ENCODE measurements at regions of chr3 and their contacts with region 1.

Region 1: DNA sequence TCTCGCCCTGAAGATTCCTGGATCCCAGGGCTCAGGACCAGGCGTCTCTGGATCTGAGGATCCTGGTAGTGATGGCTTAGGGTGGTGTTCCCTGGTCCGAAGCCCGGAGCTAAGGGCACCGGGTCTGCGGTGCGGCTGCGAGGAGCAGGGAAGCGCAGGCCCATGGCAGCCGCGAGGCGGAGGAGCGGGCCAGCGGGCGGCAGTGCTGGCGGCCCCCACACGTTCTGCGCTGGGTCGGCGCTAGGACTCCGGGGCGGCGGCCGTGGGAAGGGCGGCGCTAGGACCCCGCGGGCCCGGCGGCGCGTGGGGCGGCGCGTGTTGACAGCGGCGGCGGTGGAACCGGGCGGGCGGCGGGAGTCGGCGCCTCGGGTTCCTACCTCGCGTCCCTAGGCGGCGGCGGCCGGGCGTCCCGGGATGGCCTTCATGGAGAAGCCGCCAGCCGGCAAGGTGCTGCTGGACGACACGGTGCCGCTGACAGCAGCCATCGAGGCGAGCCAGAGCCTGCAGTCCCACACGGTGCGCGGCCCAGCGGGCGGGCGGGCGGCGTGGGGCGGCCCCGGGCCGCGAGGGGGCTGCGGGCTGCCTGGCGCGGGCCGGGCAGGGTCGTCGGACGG is at the start of gene PXK:
- DNase-seq: no peak
- H3K4me3 ChIP-seq: peak within 1 kb of the TSS; percentile 90 to 95
- H3K27ac ChIP-seq: peak within 1 kb of the TSS; percentile 84
- H3K4me1 ChIP-seq: peaks cover 58% of the 10 kb centered on the region
- H3K27me3 ChIP-seq: no peaks in the 10 kb centered on the region
- CTCF ChIP-seq: no peak
- POLR2A ChIP-seq: peak in 1 of 2 donors; percentile 48
- total RNA-seq, gene PXK: 59.9 TPM

Region 2: DNA sequence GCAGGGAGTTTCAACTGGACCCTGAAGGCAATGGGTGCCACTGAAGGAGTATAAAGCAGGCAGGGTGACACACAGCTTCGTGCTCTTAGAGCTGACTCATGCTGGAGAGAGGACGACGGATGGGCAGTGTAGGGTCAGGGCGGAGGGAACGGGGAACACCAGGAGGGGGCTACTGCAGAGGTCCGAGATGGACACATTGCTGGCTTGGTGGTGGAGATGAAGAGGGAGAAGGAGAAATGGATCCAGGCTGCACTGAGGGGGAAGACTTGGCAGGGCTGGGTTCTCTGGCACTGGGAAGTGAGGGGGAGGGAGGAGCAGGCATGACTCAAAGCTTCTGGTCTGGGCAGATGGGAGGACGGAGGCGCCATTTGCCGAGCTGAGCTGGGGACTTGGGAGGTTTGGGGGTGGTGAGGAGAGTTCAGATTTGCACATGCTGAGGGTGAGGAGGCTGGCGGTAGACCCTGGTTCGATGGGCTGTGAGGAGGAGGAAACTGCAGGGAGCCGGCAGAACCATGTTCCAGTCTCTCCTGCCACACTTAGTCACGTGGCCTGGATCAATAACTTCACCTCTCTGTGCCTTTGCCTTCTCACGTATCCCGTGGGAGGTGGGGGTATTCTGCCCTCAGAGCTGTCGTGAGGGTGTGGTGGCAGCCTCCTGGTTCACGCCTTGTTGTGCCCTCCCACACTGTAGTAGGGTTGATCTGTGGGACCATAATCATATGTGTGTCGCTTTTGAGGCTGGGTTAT is 154.6 kb after region 1 on chr3:
- intact Hi-C with region 1: loop called (anchors 10 kb)
- DNase-seq: no peak
- H3K4me3 ChIP-seq: no peak overlapping the region
- H3K27ac ChIP-seq: no peak overlapping the region
- H3K4me1 ChIP-seq: peaks cover 24% of the 10 kb centered on the region
- H3K27me3 ChIP-seq: no peaks in the 10 kb centered on the region
- CTCF ChIP-seq: no peak
- POLR2A ChIP-seq: no peak

Measured in vagina (tissue), 2 donors.